HAP-1 (cell line): ENCODE measurements at regions of chr9 and their contacts with region 1.

Region 1: DNA sequence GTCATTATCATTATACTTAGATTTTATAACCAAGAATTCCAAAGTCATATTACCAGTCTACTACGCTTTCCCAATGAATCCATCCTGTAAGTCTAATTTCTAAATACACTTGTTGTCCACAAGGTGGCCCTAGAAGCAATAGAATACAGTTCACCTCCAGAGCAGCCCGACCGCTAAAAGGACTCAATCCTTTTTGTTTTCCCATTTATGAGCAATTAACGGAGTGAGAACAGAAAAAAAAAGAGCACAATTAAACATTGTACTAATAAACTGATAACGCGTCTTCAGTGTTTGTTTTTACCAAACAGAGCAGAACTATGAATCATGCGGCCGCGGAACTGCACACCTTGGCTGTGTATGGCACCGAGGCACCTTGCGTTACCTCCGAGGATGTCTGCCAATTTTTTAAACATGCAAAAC is 160.7 kb upstream of the DAPK1 start:
- DNase-seq: peak; percentile 25 to 74
- H3K4me3 ChIP-seq: peak overlapping the region; percentile 4
- H3K4me1 ChIP-seq: no peaks in the 10 kb centered on the region
- H3K27me3 ChIP-seq: peaks cover 4% of the 10 kb centered on the region; the same call in 1 of the 2 replicates

Region 2: GRCh38 chr9:86486891-86487837 is 849.8 kb before region 1 on chr9:
- in situ Hi-C with region 1: loop called (anchors 25 kb)
- DNase-seq: peak in 1 of 2 experiments; percentile 30
- H3K4me3 ChIP-seq: no peak overlapping the region
- H3K4me1 ChIP-seq: no peaks in the 10 kb centered on the region
- H3K27me3 ChIP-seq: no peaks in the 10 kb centered on the region

Region 3: GRCh38 chr9:87193925-87194868 is 142.7 kb before region 1 on chr9:
- in situ Hi-C with region 1: no loop called
- DNase-seq: no peak
- H3K4me3 ChIP-seq: no peak overlapping the region
- H3K4me1 ChIP-seq: no peaks in the 10 kb centered on the region
- H3K27me3 ChIP-seq: peaks cover 14% of the 10 kb centered on the region

Region 4: DNA sequence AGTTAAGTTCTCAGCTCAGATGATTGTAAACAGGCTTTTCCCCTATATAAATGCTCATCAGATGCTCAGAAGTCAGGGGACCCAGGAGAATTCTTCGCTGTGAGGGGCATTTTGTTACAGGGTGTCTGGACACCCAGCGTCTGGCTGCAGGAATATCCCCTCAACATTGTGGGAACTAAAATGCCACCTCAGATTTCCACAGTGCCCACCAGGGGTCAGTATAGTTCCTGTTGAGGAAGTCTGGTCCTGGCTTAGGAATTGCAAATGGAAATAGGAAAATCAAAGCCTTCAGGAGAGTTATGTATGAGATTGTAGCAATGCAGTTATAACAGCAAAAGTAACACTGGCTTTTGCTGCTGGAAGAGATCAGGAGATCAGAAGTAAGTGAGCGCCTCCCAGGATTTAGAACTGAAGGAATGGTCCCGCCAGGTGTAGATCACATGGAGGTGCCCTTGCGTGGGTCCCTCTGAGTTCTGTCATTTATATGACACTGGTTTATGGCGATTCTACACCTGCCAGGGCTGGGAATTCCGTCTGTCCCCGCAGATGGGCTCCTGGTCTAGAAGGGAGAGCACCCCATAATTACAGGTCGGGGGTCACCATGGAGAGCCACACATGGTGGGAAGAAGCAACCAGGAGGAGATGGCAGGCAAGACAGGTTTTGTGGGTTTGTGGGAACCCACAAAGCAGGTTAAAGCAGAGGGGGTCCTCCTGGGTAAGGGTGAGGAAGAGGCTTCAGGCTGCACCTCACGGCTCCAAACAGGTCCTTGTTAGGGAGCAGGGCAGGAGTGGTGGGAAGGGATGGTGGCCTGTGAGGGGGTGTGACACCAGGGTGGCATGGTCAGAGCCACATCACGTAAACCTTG is 342.0 kb after region 1 on chr9:
- in situ Hi-C with region 1: loop called (anchors 10 kb)
- DNase-seq: peak; percentile 76 to 78
- H3K4me3 ChIP-seq: no peak overlapping the region
- H3K4me1 ChIP-seq: no peaks in the 10 kb centered on the region
- H3K27me3 ChIP-seq: no peaks in the 10 kb centered on the region

Region 5: GRCh38 chr9:87812375-87813118 is 475.6 kb after region 1 on chr9:
- in situ Hi-C with region 1: loop called (anchors 25 kb)
- DNase-seq: peak; percentile 46 to 50
- H3K4me3 ChIP-seq: no peak overlapping the region
- H3K4me1 ChIP-seq: no peaks in the 10 kb centered on the region
- H3K27me3 ChIP-seq: no peaks in the 10 kb centered on the region; the same call in 1 of the 2 replicates